A673 (cell line): ENCODE measurements at regions of chr15 and their contacts with region 1.

Region 1: DNA sequence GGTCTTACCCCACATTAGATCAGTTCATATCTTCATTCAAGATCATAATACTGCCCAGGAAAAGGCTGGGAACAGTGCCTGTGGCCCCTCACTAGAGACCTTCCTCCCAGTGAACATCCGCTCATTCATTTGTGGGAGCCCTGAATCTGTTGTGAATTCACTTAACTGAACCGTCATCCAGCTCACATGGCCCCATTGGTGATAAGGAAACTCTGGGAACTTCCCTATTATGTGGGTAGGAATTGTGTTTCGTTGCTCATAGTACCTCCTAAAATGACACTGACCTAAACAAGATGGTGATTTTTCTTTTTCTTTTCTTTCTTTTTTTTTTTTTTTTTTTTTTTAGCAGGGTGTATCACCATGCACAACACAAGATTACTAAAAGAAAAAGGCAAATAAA is 6.8 kb upstream of the MESP2 start:
- DNase-seq: no peak
- H3K4me3 ChIP-seq: no peak overlapping the region
- H3K27ac ChIP-seq: no peak overlapping the region
- H3K4me1 ChIP-seq: no peaks in the 10 kb centered on the region
- H3K27me3 ChIP-seq: no peaks in the 10 kb centered on the region
- CTCF ChIP-seq: no peak

Region 2: GRCh38 chr15:89587952-89588351 is 181.4 kb before region 1 on chr15:
- CTCF ChIA-PET with region 1: no interaction called
- POLR2A ChIA-PET with region 1: no interaction called
- intact Hi-C with region 1: no loop called
- DNase-seq: peak; percentile 9
- H3K4me3 ChIP-seq: no peak overlapping the region
- H3K27ac ChIP-seq: no peak overlapping the region
- H3K4me1 ChIP-seq: no peaks in the 10 kb centered on the region
- H3K27me3 ChIP-seq: no peaks in the 10 kb centered on the region
- CTCF ChIP-seq: no peak

Region 3: GRCh38 chr15:89647191-89647851 is 122.0 kb before region 1 on chr15:
- CTCF ChIA-PET with region 1: no interaction called
- POLR2A ChIA-PET with region 1: no interaction called
- intact Hi-C with region 1: no loop called
- DNase-seq: peak; percentile 67
- H3K4me3 ChIP-seq: no peak overlapping the region
- H3K27ac ChIP-seq: no peak overlapping the region
- H3K4me1 ChIP-seq: no peaks in the 10 kb centered on the region
- H3K27me3 ChIP-seq: no peaks in the 10 kb centered on the region
- CTCF ChIP-seq: peak; percentile 99

Region 4: GRCh38 chr15:90020021-90020735 is 250.8 kb after region 1 on chr15:
- CTCF ChIA-PET with region 1: interaction called, 15 read pairs
- POLR2A ChIA-PET with region 1: no interaction called
- intact Hi-C with region 1: no loop called
- DNase-seq: no peak
- H3K4me3 ChIP-seq: no peak overlapping the region
- H3K27ac ChIP-seq: peak overlapping the region; percentile 33
- H3K4me1 ChIP-seq: peaks cover 17% of the 10 kb centered on the region
- H3K27me3 ChIP-seq: no peaks in the 10 kb centered on the region
- CTCF ChIP-seq: no peak